Lower lobe of right lung (tissue), 2 donors: ENCODE measurements at regions of chr11 and their contacts with region 1.

Region 1: DNA sequence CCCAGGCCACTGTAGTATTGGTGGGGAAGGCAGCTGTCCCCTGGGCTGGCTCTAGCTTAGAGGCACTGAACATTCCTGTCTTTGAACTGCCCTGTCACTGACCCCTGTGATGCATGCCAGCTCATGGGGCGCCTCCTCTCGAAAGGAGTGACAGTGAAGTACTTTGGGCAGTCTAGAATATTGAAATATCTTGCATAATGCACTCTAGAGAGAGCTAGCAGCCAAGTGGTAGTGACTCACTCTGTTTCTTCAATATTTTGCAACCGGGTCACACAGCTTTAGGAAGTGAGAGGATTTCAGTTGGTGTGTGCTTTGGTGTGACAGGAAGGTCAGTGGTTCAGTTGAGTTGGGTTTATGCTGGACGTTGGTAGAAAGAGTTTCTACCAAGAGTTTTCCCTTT is 35.5 kb upstream of the ST14 start:
- DNase-seq: peak; percentile 91
- ATAC-seq: peak; percentile 97
- H3K4me3 ChIP-seq: no peak overlapping the region
- H3K27ac ChIP-seq: peak overlapping the region; percentile 78
- H3K4me1 ChIP-seq: peaks cover 65% of the 10 kb centered on the region
- H3K27me3 ChIP-seq: no peaks in the 10 kb centered on the region
- CTCF ChIP-seq: no peak

Region 2: DNA sequence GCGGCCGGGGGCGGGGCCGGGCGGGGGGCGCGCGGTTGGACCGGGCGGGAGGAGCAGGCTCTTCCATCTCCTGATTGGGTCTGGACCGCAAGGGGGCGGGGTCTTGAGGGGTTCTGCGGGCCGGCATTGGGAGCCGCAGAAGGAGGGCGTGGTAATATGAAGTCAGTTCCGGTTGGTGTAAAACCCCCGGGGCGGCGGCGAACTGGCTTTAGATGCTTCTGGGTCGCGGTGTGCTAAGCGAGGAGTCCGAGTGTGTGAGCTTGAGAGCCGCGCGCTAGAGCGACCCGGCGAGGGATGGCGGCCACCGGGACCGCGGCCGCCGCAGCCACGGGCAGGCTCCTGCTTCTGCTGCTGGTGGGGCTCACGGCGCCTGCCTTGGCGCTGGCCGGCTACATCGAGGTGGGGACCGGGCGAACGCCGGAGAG is 54.4 kb before region 1 on chr11 and contains the start of gene APLP2:
- intact Hi-C with region 1: loop called (anchors 10 kb)
- DNase-seq: peak; percentile 99
- ATAC-seq: peak; percentile 93 to 97
- H3K4me3 ChIP-seq: peak within 1 kb of the TSS; percentile 78
- H3K27ac ChIP-seq: peak within 1 kb of the TSS; percentile 95
- H3K4me1 ChIP-seq: peaks cover 41% of the 10 kb centered on the region
- H3K27me3 ChIP-seq: no peaks in the 10 kb centered on the region
- CTCF ChIP-seq: peak; percentile 4
- total RNA-seq, gene APLP2: 582 TPM